ENCODE measurements at regions of chr16 and their contacts with region 1.

Region 1: GRCh38 chr16:85369741-85370528 is 243.2 kb upstream of the GSE1 start:
- DNase-seq: no peak
- H3K4me3 ChIP-seq: no peak overlapping the region
- CTCF ChIP-seq: peak; percentile 84

Region 2: DNA sequence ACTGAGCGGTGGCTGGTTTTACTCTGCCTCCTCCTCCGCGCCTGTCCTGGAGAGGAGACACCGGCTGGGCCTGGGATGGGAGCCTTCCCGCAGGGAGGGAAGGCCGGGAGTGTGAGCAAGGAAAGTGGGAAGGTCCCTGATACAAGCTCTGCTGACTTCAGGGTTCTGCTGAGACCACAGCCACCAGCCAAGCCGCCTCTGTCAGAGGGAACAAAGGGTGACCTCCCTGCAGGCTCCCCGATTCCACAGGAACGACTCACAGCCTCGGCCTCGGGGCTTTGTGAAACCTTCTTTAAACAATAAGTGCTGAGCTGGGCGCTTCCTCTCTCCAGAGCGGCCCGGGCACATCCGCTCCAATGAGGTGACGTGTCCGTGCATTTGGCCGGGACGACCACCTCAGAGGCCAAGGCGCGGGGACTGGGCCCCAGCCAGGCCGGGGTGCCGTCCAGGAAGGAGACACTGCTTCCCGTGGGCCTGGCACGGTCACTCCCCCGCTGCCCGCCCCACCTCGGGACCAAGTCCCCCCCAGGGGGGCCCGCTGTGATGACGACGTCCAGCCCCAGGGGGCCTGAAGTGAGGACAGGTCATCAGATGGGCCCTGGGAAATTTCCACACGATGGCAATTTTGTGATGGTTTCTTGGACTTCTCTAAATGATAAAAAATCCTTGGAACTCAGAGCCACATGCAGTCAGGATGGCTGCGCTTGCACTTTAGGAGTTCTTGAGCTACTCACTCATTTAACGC is 245.9 kb before region 1 on chr16:
- in situ Hi-C with region 1: no loop called
- DNase-seq: peak; percentile 81
- H3K4me3 ChIP-seq: no peak overlapping the region
- CTCF ChIP-seq: no peak

Region 3: GRCh38 chr16:85316321-85316919 is 53.5 kb before region 1 on chr16:
- in situ Hi-C with region 1: loop called (anchors 5 kb)
- DNase-seq: no peak
- H3K4me3 ChIP-seq: no peak overlapping the region
- CTCF ChIP-seq: peak; percentile 94

Region 4: DNA sequence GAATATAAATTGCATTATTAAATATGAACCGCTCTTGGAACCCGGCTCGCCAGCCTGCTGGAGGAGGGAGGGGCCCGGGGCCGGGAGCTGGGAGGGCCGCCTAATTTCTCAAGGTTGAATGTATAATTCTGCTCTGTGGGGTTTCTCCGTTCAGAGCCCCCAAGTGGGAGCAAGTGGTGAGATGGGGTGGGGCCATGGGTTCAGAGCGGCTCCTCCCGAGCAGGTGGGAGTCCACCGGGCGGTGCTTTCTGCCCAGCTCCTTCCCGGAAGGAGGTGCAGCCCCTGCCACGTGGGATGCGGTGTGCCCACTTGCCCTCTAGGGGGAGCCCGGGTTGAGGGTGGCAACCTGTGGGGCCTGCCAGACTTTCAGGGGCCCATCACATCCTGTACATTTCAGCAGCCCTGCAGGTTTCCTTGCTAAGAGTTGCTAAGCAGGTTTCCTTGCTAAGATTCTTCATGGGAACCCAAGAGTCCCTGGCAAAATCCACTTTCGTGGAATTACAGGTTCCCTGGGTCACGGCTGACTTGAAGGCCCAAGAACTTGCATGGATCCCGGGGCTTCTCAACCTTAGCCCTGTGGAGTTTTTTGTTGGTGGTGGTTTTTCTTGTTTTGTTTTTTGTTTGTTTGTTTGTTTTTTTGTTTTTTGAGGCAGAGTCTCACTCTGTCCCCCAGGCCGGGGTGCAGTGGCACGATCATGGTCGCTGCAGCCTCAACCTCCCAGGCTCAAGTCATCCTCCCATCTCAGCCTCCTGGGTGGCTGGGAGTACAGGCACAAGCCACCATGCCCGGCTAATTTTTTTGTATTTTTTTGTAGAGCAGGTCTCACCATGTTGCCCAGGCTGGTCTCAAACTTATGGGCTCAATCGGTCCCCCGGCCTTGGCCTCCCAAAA is 46.5 kb after region 1 on chr16:
- in situ Hi-C with region 1: no loop called
- DNase-seq: no peak
- H3K4me3 ChIP-seq: no peak overlapping the region
- CTCF ChIP-seq: peak; percentile 62

Region 5: DNA sequence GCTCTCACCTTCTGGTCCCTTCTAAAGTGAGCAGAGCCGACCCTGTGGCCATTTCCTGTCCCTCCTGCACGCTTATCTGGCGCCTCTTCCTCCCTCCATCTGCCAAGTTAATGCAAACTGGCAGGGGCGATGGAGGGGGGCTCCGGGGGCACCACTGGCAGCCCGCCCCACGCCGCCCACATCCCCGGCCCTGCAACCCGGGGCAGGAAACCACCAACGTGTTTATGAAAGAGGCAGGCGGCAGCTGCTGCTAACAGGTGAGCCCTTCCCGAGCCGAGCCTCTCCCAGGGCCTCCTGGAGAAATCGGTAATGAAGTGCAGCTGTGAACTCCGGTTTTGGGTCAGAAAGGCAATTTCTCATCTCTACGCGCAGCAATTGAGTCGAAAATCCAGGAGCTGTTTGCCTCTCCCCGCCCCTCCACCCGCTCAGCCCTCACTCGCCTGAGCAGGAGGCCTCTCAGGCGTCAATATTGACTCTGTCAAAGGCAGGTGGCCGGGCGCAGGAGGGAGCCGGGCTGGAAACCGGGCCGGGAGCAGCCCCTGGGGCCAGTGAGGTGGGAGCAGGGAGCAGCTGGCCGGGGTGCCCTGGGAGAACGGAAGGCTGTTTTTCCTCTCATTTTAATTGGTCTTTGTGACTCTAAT is 78.7 kb after region 1 on chr16:
- in situ Hi-C with region 1: loop called (anchors 5 kb)
- DNase-seq: no peak
- H3K4me3 ChIP-seq: no peak overlapping the region
- CTCF ChIP-seq: no peak

Measured in astrocyte of the cerebellum (primary cell).